ENCODE measurements at regions of chr5 and their contacts with region 1.

Region 1: GRCh38 chr5:42583322-42583721 is 160.1 kb downstream of the GHR start:
- DNase-seq: peak; percentile 52
- ATAC-seq: no peak
- H3K4me3 Mint-ChIP-seq: no peak overlapping the region
- H3K27ac Mint-ChIP-seq: no peak overlapping the region
- H3K4me1 Mint-ChIP-seq: no peaks in the 10 kb centered on the region
- H3K27me3 Mint-ChIP-seq: peaks cover 10% of the 10 kb centered on the region

Region 2: DNA sequence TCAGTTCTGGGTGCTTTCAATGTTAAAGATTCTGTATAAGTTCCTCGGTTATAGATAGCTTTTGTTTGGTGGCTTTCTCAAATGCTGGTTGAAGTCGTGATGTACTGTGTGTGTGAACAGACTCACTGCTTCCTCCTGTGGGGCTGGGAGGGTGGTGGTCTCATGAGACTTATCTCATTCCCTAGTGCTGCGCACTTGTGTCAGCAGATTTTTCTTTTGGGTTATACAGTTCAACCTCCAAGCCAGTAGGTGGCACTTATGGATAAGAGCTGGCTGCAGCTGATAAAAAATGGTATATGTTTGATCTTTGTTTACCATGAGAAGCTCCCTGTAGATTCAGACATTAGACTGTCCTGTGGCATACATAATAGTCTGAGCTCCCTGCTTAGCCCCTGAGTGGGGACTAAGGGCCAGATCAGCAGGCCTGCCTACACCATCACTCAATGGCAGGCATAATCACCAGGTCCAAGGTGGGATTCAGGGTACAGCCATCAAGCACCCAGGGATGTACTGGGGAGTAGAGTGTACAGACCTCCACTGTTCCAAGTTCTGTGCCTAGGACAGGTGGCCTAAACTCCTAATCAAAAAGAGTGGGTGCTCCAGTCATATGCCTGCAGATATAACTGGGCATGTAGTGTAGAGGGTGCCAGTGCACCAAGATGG is 887.3 kb before region 1 on chr5:
- CTCF ChIA-PET with region 1: no interaction called
- POLR2A ChIA-PET with region 1: no interaction called
- intact Hi-C with region 1: loop called in 1 of 2 experiments (anchors 10 kb)
- DNase-seq: peak; percentile 7
- ATAC-seq: peak; percentile 42
- H3K4me3 Mint-ChIP-seq: no peak overlapping the region
- H3K27ac Mint-ChIP-seq: no peak overlapping the region
- H3K4me1 Mint-ChIP-seq: no peaks in the 10 kb centered on the region
- H3K27me3 Mint-ChIP-seq: peaks cover 14% of the 10 kb centered on the region

Region 3: DNA sequence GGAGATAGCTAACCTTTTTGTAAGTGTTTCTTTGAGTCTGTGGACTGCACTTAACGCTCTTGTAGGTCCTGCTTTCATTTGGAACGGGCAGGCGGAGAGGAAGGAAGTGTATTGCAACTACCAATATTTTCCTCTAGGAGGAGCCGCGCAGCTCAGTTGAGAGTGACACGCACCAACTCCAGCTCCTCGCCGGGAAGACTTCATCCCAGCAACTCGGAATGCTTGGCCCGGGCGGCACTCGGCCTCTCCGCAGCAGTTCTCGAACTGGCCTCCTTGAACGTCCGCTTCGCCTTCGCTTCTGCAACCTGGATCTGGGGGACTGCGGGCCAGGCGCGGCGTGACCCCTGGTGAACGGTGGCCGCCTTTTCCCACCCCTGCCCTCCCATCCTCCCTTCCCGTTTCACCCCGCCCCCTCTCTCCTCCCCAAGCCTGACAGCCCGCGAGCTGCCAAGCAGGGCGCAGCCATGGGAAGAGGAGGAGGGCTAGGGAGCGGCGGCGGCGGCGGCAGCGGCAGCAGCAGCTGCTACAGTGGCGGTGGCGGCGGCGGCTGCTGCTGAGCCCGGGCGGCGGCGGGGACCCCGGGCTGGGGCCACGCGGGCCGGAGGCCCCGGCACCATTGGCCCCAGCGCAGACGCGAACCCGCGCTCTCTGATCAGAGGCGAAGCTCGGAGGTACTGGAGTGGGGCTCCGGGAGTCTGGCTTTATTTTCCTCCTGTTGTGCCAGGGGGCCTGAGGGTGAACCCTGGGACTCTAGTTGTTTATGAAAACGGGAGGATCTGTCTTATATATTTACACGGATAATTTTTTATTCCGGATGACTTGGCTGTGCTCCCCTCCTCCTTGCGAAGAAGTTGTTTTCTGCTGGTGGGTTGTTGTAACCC is 159.8 kb before region 1 on chr5 and contains the start of gene GHR:
- CTCF ChIA-PET with region 1: no interaction called
- POLR2A ChIA-PET with region 1: no interaction called
- intact Hi-C with region 1: loop called in 1 of 2 experiments (anchors 1 kb)
- DNase-seq: peak; percentile 54
- ATAC-seq: peak; percentile 73
- H3K4me3 Mint-ChIP-seq: no peak within 1 kb of the TSS
- H3K27ac Mint-ChIP-seq: no peak within 1 kb of the TSS
- H3K4me1 Mint-ChIP-seq: no peaks in the 10 kb centered on the region
- H3K27me3 Mint-ChIP-seq: peaks cover 24% of the 10 kb centered on the region
- total RNA-seq, gene GHR: not detected

Region 4: GRCh38 chr5:42531611-42532010 is 51.7 kb before region 1 on chr5:
- CTCF ChIA-PET with region 1: no interaction called
- POLR2A ChIA-PET with region 1: no interaction called
- intact Hi-C with region 1: no loop called
- DNase-seq: no peak
- ATAC-seq: no peak
- H3K4me3 Mint-ChIP-seq: no peak overlapping the region
- H3K27ac Mint-ChIP-seq: no peak overlapping the region
- H3K4me1 Mint-ChIP-seq: no peaks in the 10 kb centered on the region
- H3K27me3 Mint-ChIP-seq: peaks cover 2% of the 10 kb centered on the region

Region 5: GRCh38 chr5:42666869-42667268 is 83.5 kb after region 1 on chr5:
- CTCF ChIA-PET with region 1: no interaction called
- POLR2A ChIA-PET with region 1: no interaction called
- intact Hi-C with region 1: no loop called
- DNase-seq: no peak
- ATAC-seq: no peak
- H3K4me3 Mint-ChIP-seq: no peak overlapping the region
- H3K27ac Mint-ChIP-seq: no peak overlapping the region
- H3K4me1 Mint-ChIP-seq: no peaks in the 10 kb centered on the region
- H3K27me3 Mint-ChIP-seq: peaks cover 3% of the 10 kb centered on the region